ENCODE measurements at regions of chr14 and their contacts with region 1.

Region 1: DNA sequence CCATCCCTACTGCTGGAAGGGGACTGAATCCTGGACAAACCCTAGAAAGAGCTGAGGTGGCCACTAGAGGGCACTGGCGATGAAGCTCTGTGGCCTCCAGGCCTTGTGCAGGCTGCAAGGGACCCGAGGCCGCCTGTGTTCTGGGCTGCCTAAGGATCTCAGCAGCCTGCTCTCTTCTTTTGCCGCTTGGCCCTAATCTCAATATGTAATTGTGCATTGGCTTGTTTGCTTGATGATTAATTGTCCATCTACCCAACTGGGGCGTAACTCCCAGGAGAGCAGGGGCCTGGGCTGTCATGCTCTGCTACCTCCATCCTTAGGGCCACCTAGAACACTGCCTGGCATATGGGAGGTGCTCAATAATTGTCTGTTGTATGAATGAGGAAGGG is 73.8 kb downstream of the SYNE3 start:
- DNase-seq: peak; percentile 88
- CTCF ChIP-seq: peak; percentile 88

Region 2: GRCh38 chr14:95431199-95432143 is 11.2 kb before region 1 on chr14:
- CTCF ChIA-PET with region 1: interaction called, 100 read pairs
- POLR2A ChIA-PET with region 1: no interaction called
- DNase-seq: no peak
- CTCF ChIP-seq: peak; percentile 29

Region 3: GRCh38 chr14:95460647-95461478 is 18.2 kb after region 1 on chr14:
- CTCF ChIA-PET with region 1: interaction called, 127 read pairs
- POLR2A ChIA-PET with region 1: no interaction called
- DNase-seq: no peak
- CTCF ChIP-seq: no peak

Region 4: DNA sequence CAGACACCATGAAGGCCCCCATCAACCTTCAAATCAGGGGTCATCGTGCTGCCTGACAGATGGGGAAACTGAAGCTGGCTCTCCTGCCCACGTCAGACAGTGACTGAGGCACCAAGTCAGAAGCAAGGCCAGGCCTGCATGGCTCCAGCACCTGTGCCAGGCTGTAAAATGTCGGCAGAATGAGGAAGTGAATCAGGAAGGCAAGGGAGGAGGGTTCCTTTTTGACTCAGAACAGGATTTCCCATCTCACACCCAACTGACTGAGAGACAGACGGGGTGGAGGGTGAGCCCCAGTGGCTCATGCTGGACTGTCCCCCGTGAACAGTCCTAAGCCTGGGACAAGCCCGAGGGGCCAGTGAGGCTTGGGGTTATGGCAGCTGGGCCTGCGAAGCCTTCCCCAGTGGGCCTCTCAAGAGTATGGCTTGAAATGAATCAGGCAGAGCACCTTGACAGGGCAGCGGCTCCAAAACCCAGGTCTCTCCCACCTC is 53.0 kb after region 1 on chr14:
- CTCF ChIA-PET with region 1: interaction called, 10 read pairs
- POLR2A ChIA-PET with region 1: no interaction called
- DNase-seq: peak; percentile 82
- CTCF ChIP-seq: no peak

Region 5: DNA sequence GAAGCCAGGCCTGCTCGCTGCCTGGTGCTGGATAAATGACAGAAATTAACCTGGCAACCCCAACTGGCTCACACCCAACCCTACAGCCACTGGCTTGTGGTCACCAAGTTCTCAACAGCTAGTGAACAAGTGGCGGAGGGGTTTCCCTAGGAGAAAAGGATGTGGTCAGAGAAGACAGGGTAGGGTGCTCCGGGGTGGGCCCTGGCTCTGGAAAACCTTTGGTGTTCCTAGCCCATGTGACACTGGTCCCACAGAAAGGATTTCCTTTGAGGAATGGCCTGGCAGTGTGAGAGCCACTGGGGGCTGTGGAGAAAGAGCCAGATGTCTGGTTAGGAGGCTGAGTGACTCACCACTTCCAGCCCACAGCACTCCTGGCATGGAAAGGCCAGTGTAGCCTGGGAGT is 65.1 kb after region 1 on chr14:
- CTCF ChIA-PET with region 1: interaction called, 12 read pairs
- POLR2A ChIA-PET with region 1: no interaction called
- DNase-seq: no peak
- CTCF ChIP-seq: no peak

Region 6: GRCh38 chr14:95515596-95516552 is 73.2 kb after region 1 on chr14:
- CTCF ChIA-PET with region 1: interaction called, 21 read pairs
- POLR2A ChIA-PET with region 1: no interaction called
- DNase-seq: peak; percentile 92
- CTCF ChIP-seq: peak; percentile 30

Region 7: DNA sequence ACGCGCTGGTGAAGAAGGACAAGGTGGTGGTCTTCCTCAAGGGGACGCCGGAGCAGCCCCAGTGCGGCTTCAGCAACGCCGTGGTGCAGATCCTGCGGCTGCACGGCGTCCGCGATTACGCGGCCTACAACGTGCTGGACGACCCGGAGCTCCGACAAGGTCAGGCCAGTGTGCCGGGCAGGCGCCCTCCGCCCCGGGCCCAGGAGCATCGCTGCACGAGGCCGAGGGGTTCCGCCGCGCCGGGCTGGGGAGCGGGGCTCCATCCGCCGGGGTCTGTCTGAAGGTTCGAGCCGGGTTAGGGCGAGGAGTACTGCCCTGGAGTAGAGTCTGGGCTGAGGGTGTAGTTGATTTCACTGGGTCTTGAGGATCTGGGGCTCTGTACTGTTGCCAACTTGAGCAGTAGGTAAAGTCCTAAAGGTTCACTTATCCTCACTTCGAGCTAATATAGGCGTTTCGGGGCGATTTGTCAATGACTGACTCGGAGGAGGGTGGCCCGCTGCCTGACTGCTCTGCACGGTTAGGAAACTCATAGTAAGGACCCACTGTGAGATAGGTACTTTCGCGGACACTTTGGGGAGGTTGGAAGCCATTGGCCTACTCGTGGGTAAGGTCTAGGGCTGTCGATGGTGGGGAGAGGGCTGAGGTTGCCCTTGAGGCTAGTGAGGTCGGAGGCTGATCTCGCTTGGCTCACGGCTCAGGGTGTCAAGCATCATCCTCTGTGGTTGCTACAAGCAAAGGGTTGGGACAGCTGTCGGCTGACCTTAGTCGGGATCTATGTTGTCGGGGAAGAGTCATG is 92.8 kb after region 1 on chr14:
- CTCF ChIA-PET with region 1: interaction called, 13 read pairs
- POLR2A ChIA-PET with region 1: no interaction called
- DNase-seq: no peak
- CTCF ChIP-seq: no peak

Measured in GM10248 (cell line).